ENCODE measurements at regions of chr5 and their contacts with region 1.

Region 1: GRCh38 chr5:177554474-177555111 is at the start of gene FAM193B:
- DNase-seq: peak; percentile 89
- H3K4me3 ChIP-seq: peak within 1 kb of the TSS; percentile 54 to 84 (median 60)
- H3K27ac ChIP-seq: no peak within 1 kb of the TSS
- H3K4me1 ChIP-seq: peaks cover 8% of the 10 kb centered on the region
- H3K27me3 ChIP-seq: peaks cover 0 to 5% of the 10 kb centered on the region in 2 experiments
- CTCF ChIP-seq: peak; percentile 5 to 7
- POLR2A ChIP-seq: no peak
- total RNA-seq, gene FAM193B: 73.6 and 75.7 TPM in 2 replicates

Region 2: GRCh38 chr5:177516604-177517568 is 37.7 kb before region 1 on chr5 and contains the start of gene DDX41:
- CTCF ChIA-PET with region 1: interaction called, 3 read pairs
- POLR2A ChIA-PET with region 1: no interaction called
- dilution Hi-C with region 1: no loop called
- intact Hi-C with region 1: loop called (anchors 1 kb)
- DNase-seq: peak; percentile 100
- H3K4me3 ChIP-seq: peak within 1 kb of the TSS; percentile 26 to 98 (median 51)
- H3K27ac ChIP-seq: peak within 1 kb of the TSS; percentile 18
- H3K4me1 ChIP-seq: peaks cover 8% of the 10 kb centered on the region
- H3K27me3 ChIP-seq: no peaks in the 10 kb centered on the region
- CTCF ChIP-seq: peak in 1 of 2 donors; percentile 5
- POLR2A ChIP-seq: no peak
- total RNA-seq, gene DDX41: 86.4 and 103 TPM in 2 replicates

Region 3: DNA sequence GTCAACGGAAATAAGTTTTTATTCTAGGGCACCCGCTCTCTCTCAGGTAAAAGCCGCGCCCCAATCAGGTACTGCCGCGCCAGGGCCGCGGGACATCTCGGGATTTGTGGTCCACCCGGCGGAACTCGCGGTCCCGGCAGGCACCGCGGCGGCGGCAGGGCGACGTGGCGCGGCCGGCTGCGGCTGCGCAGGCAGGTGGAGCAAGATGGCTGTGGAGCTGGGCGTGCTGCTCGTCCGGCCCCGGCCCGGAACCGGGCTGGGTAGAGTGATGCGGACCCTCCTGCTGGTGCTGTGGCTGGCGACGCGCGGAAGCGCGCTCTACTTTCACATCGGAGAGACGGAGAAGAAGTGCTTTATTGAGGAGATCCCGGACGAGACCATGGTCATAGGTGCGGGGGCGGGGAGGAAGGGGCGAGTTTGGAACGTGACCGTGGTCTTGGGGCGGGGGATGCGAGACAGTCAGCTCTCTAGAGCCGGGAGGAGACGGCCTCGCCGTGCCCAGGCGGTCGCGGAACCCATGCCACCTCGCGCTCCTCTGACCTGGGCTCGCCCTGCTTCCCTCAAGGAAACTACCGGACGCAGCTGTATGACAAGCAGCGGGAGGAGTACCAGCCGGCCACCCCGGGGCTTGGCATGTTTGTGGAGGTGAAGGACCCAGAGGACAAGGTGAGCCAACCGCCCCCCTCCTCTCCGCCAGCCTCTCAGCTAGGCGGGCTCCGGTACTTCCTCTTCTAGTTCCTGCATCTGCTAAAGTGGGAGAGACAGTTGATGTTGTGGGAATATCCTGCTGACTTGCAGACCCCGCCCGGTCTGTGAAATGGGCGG is 37.6 kb after region 1 on chr5 and contains the start of gene TMED9:
- CTCF ChIA-PET with region 1: no interaction called
- POLR2A ChIA-PET with region 1: no interaction called
- dilution Hi-C with region 1: no loop called
- intact Hi-C with region 1: loop called (anchors 5 kb)
- DNase-seq: peak; percentile 92
- H3K4me3 ChIP-seq: peak within 1 kb of the TSS; percentile 72 to 92 (median 90)
- H3K27ac ChIP-seq: peak within 1 kb of the TSS; percentile 64
- H3K4me1 ChIP-seq: peaks cover 9% of the 10 kb centered on the region
- H3K27me3 ChIP-seq: peaks cover 13 to 33% of the 10 kb centered on the region in 2 experiments
- CTCF ChIP-seq: no peak
- POLR2A ChIP-seq: peak; percentile 96
- total RNA-seq, gene TMED9: 286 and 291 TPM in 2 replicates